ENCODE measurements at regions of chr2 and their contacts with region 1.

Region 1: DNA sequence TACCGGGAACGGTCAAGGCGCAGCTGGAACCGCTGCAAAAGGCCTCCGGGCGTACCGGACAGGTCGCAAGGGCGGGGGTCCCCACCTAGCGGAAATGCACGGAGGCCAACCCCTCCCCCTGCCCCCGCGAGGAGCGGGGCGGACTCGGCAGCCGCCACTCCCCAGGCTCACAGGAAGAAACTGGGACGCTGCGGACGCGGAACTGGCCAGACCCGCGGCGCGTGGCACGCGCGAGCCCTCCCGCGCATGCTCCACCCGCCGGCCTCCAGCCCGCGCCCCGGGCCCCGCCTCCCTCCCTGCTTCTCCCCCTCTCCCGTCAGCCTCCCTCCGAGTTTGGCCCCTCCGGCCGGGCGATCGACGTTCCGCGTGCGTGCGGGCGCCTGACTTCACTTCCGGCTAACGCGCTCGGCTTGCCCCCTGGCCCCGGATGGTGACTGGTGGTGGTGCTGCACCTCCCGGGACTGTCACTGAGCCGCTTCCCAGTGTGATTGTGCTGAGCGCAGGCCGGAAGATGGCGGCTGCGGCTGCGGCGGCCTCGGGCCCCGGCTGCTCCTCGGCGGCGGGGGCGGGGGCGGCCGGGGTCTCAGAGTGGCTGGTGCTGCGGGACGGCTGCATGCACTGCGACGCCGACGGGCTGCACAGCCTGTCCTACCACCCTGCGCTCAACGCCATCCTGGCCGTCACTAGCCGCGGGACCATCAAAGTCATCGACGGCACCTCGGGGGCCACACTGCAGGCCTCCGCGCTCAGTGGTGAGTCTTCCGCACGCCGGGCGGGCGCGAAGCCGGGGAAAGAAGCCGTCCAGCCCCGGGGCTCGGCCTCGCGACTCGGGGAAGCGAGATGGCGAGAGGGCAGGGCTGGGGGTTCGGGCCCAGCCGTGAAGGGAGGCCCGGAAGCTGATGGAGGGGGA is at the start of gene BIRC6:
- DNase-seq: peak; percentile 97
- H3K4me3 Mint-ChIP-seq: peak within 1 kb of the TSS; percentile 78
- H3K27ac Mint-ChIP-seq: peak within 1 kb of the TSS; percentile 85
- H3K4me1 Mint-ChIP-seq: peaks cover 31% of the 10 kb centered on the region
- H3K27me3 Mint-ChIP-seq: no peaks in the 10 kb centered on the region
- total RNA-seq, gene BIRC6: 51.4 to 52.9 TPM

Region 2: DNA sequence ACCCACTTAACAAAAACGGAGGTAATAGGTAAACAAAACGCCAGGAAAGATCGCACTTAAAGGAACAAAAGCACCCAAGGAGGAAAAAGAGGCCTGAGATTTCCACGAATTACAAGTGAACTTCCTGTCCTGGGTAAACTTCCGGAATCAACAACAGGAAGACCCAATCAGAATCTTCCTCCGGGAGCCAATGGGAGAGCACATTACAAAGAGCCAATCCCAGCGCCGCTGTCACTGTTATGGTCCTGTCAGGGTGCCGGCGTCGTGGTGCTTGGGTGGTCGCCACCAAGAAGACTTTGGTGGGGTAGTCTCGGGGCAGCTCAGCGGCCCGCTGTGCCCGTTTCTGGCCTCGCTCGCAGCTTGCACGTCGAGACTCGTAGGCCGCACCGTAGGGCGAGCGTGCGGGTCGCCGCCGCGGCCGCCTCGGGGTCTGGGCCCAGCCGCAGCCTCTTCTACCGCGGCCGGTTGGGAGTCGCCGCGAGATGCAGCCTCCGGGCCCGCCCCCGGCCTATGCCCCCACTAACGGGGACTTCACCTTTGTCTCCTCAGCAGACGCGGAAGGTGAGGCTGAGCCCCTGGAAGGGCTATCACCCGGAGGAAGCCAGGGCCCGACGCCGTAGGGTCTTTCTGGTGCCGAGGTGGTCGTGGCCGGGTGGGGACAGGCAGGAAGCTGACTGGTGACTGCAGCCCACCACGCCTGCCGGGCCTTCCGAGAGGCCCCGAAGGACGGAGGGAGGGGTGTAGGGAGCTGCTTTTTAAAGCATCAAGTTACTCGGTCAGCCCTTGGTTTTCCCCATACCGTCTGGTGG is 79.1 kb before region 1 on chr2 and contains the start of gene YIPF4:
- CTCF ChIA-PET with region 1: no interaction called
- intact Hi-C with region 1: loop called (anchors 1 kb)
- DNase-seq: peak; percentile 91
- H3K4me3 Mint-ChIP-seq: peak within 1 kb of the TSS; percentile 84
- H3K27ac Mint-ChIP-seq: peak within 1 kb of the TSS; percentile 93
- H3K4me1 Mint-ChIP-seq: peaks cover 22% of the 10 kb centered on the region
- H3K27me3 Mint-ChIP-seq: no peaks in the 10 kb centered on the region
- total RNA-seq, gene YIPF4: 36.5 to 39.7 TPM

Region 3: GRCh38 chr2:32330136-32330535 is 26.9 kb before region 1 on chr2:
- CTCF ChIA-PET with region 1: no interaction called
- intact Hi-C with region 1: no loop called
- DNase-seq: no peak
- H3K4me3 Mint-ChIP-seq: no peak overlapping the region
- H3K27ac Mint-ChIP-seq: no peak overlapping the region
- H3K4me1 Mint-ChIP-seq: no peaks in the 10 kb centered on the region
- H3K27me3 Mint-ChIP-seq: no peaks in the 10 kb centered on the region

Region 4: GRCh38 chr2:32402091-32402490 is 45.1 kb after region 1 on chr2:
- CTCF ChIA-PET with region 1: no interaction called
- intact Hi-C with region 1: no loop called
- DNase-seq: no peak
- H3K4me3 Mint-ChIP-seq: no peak overlapping the region
- H3K27ac Mint-ChIP-seq: no peak overlapping the region
- H3K4me1 Mint-ChIP-seq: peaks cover 10% of the 10 kb centered on the region
- H3K27me3 Mint-ChIP-seq: no peaks in the 10 kb centered on the region

Region 5: DNA sequence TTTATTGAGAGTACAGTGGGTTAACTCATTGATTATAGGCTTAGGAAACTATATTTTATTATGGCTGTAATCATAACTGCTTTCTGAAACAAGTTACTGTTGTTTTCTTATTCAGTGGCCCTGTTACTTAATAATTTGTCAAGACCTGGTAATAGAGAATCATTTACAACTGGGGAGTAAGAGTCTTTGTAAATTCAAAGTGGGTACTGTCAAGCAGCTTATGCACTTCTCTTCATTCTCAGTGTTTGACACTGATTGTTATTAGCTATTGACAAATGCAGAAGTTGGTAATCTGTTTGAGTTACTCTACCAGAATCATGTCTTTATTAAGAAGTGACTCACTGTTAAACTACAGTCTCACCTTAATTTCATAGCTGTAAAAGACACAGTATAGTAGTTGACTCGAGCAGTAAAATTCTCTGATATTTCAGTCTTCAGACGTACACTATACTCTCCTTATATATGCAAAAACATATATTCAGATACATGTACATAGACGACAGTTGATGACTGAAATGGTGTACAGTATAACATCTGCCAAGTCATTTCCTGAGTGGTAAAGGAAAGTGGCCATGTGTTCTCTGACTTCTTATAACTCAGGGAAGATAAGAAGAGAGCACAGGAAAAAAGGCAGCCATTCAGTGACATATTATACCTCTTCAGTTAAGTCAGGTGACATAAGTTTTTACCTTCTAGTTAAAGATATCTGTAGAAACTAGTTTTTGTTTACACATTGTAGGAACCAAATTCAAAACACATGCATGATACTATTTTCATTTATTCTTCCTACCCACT is 234.9 kb after region 1 on chr2:
- CTCF ChIA-PET with region 1: no interaction called
- intact Hi-C with region 1: loop called (anchors 5 kb)
- DNase-seq: peak; percentile 20
- H3K4me3 Mint-ChIP-seq: peak overlapping the region; percentile 39
- H3K27ac Mint-ChIP-seq: peak overlapping the region; percentile 90
- H3K4me1 Mint-ChIP-seq: peaks cover 36% of the 10 kb centered on the region
- H3K27me3 Mint-ChIP-seq: no peaks in the 10 kb centered on the region

Region 6: GRCh38 chr2:33599175-33599942 is 1242.4 kb after region 1 on chr2 and contains the start of gene FAM98A:
- CTCF ChIA-PET with region 1: no interaction called
- intact Hi-C with region 1: loop called (anchors 10 kb)
- DNase-seq: peak; percentile 98
- H3K4me3 Mint-ChIP-seq: peak within 1 kb of the TSS; percentile 95
- H3K27ac Mint-ChIP-seq: peak within 1 kb of the TSS; percentile 87
- H3K4me1 Mint-ChIP-seq: peaks cover 22% of the 10 kb centered on the region
- H3K27me3 Mint-ChIP-seq: no peaks in the 10 kb centered on the region
- total RNA-seq, gene FAM98A: 45.4 to 46.1 TPM